ENCODE measurements at regions of chr18 and their contacts with region 1.

Region 1: GRCh38 chr18:63016270-63016669 is 300.9 kb downstream of the PHLPP1 start:
- DNase-seq: peak; percentile 36
- ATAC-seq: peak; percentile 68
- H3K4me3 ChIP-seq: no peak overlapping the region
- H3K27ac ChIP-seq: no peak overlapping the region
- H3K4me1 ChIP-seq: no peaks in the 10 kb centered on the region
- H3K27me3 ChIP-seq: peaks cover 0 to 4% of the 10 kb centered on the region in 2 experiments; a peak in 3 of 5 replicates
- CTCF ChIP-seq: peak; percentile 71
- EP300 ChIP-seq: no peak
- POLR2A ChIP-seq: no peak
- RAD21 ChIP-seq: peak; percentile 36; the same call in 1 of the 2 replicates

Region 2: DNA sequence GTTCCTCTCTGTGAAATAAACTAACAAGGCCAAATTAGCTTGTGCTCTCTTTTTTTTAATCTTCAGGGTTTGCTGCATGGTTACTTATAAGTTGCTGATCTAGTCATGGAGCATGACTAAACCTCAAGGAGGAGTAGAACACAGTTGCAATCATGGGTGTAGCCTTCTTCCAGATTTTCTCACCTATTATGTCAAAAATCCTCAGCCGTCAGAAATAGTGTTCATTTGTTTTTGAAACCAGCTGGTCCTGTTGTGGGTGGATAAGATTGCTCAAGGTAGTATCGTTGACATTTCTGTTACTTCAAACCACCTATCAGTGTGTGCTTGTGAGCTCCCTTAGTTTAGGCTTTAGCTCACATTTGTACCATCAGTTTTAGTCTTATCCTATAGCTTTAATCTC is 818.0 kb before region 1 on chr18:
- CTCF ChIA-PET with region 1: no interaction called
- POLR2A ChIA-PET with region 1: no interaction called
- in situ Hi-C with region 1: no loop called
- intact Hi-C with region 1: no loop called
- DNase-seq: no peak
- ATAC-seq: no peak
- H3K4me3 ChIP-seq: no peak overlapping the region
- H3K27ac ChIP-seq: no peak overlapping the region
- H3K4me1 ChIP-seq: 0 out of 2 replicates have a peak, but pooled peaks cover 6% of the 10 kb centered on the region
- H3K27me3 ChIP-seq: no peaks in the 10 kb centered on the region
- CTCF ChIP-seq: no peak
- EP300 ChIP-seq: no peak
- POLR2A ChIP-seq: no peak
- RAD21 ChIP-seq: no peak

Region 3: DNA sequence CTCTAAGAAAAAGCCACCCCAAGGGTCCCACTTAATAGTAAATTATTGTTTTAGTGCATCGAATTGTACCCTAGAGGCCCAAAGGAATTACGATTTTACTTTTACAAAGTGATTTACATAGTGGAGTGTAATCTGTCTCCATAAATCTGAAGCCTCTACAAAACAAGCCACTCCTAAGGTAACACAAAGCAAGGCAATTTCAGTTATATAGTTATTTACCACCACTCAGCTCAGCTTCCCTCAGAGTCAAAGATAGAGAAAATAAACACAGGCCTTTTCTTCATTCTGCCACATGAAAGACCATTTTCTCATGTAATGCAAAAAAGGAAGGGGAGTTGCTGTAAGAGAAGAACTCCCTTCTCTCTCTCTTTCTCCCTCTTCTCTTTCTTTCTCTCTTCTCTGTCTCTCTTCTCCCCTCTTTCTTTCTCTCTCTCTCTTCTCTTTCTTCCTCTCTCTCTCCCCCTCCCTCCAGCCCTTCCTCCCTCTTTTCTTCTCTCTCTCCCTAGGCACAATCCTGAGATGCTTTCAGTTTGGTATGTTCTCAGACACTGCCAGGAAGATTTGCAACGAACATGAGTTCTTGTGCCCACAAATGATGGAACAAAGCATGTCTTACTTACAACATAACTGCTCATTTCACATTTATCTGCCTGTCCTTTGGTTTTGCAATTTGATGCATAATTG is 38.8 kb after region 1 on chr18:
- CTCF ChIA-PET with region 1: no interaction called
- POLR2A ChIA-PET with region 1: no interaction called
- in situ Hi-C with region 1: no loop called
- intact Hi-C with region 1: no loop called
- DNase-seq: no peak
- ATAC-seq: no peak
- H3K4me3 ChIP-seq: no peak overlapping the region
- H3K27ac ChIP-seq: no peak overlapping the region
- H3K4me1 ChIP-seq: no peaks in the 10 kb centered on the region
- H3K27me3 ChIP-seq: peaks cover 0 to 9% of the 10 kb centered on the region in 2 experiments; a peak in 2 of 5 replicates
- CTCF ChIP-seq: no peak
- EP300 ChIP-seq: no peak
- POLR2A ChIP-seq: no peak
- RAD21 ChIP-seq: no peak

Region 4: GRCh38 chr18:63074981-63075404 is 58.7 kb after region 1 on chr18:
- CTCF ChIA-PET with region 1: no interaction called
- POLR2A ChIA-PET with region 1: no interaction called
- in situ Hi-C with region 1: no loop called
- intact Hi-C with region 1: loop called (anchors 5 kb)
- DNase-seq: peak; percentile 12
- ATAC-seq: peak; percentile 95
- H3K4me3 ChIP-seq: peak overlapping the region in 2 of 3 experiments; percentile 45 to 59; a peak in 3 of 6 replicates
- H3K27ac ChIP-seq: no peak overlapping the region
- H3K4me1 ChIP-seq: peaks cover 14% of the 10 kb centered on the region; the same call in 1 of the 2 replicates
- H3K27me3 ChIP-seq: 0 out of 5 replicates have a peak, but pooled peaks cover 0 to 2% of the 10 kb centered on the region in 2 experiments
- CTCF ChIP-seq: 0 out of 2 replicates have a peak, but pooled peaks have one; percentile 12
- EP300 ChIP-seq: no peak
- POLR2A ChIP-seq: no peak
- RAD21 ChIP-seq: no peak

Region 5: GRCh38 chr18:63119647-63120046 is 103.4 kb after region 1 on chr18:
- CTCF ChIA-PET with region 1: no interaction called
- POLR2A ChIA-PET with region 1: no interaction called
- in situ Hi-C with region 1: no loop called
- intact Hi-C with region 1: loop called (anchors 1 kb)
- DNase-seq: peak; percentile 6
- ATAC-seq: peak; percentile 73
- H3K4me3 ChIP-seq: no peak overlapping the region
- H3K27ac ChIP-seq: no peak overlapping the region
- H3K4me1 ChIP-seq: no peaks in the 10 kb centered on the region
- H3K27me3 ChIP-seq: no peaks in the 10 kb centered on the region
- CTCF ChIP-seq: peak; percentile 59
- EP300 ChIP-seq: no peak
- POLR2A ChIP-seq: no peak
- RAD21 ChIP-seq: no peak

Region 6: GRCh38 chr18:63155169-63155852 is 139.0 kb after region 1 on chr18:
- CTCF ChIA-PET with region 1: interaction called, 3 read pairs
- POLR2A ChIA-PET with region 1: no interaction called
- in situ Hi-C with region 1: no loop called
- intact Hi-C with region 1: loop called (anchors 1 kb)
- DNase-seq: peak; percentile 35
- ATAC-seq: peak; percentile 98
- H3K4me3 ChIP-seq: peak overlapping the region in 1 of 3 experiments; percentile 39; a peak in 1 of 6 replicates
- H3K27ac ChIP-seq: no peak overlapping the region
- H3K4me1 ChIP-seq: peaks cover 9% of the 10 kb centered on the region
- H3K27me3 ChIP-seq: peaks cover 1 to 73% of the 10 kb centered on the region in 2 experiments; a peak in 4 of 5 replicates
- CTCF ChIP-seq: peak; percentile 86
- EP300 ChIP-seq: no peak
- POLR2A ChIP-seq: no peak
- RAD21 ChIP-seq: peak; percentile 40; the same call in 1 of the 2 replicates

Region 7: DNA sequence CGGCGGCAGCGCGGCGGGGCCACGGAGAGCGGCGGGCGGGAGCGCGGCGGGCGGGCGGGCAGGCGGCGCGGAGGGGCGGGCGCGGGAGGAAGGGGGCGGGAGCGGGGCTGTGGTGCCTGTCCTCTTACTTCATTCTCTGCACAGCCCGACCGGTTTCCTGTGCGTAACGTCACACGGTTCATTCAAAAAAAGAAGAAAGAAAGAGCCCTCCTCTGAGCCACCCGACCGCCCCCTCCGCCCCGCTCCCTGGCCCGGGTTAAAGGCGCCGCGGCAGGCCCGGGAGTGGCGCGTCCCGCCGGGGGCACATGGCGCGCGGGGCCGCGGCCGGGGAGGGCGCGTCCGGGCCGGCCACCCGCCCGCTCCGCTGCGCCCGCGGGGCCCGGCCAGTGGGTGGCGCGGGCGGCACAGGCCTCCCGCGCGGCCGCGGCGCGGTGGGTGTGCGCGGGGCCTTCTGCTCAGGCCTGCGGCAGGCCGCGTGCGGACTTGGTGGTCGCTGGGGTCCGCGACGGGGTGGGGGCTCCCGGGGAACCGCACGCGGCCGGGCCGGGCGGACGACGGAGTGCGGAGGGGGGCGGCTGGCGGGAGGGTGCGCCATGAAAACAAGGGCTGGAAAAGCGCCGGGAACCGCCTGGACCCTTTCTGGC is 303.9 kb after region 1 on chr18:
- CTCF ChIA-PET with region 1: interaction called, 9 read pairs
- POLR2A ChIA-PET with region 1: no interaction called
- in situ Hi-C with region 1: loop called (anchors 5 kb)
- intact Hi-C with region 1: loop called (anchors 1 kb)
- DNase-seq: peak; percentile 61
- ATAC-seq: peak; percentile 80
- H3K4me3 ChIP-seq: peak overlapping the region; percentile 56 to 80 (median 67)
- H3K27ac ChIP-seq: no peak overlapping the region
- H3K4me1 ChIP-seq: peaks cover 46% of the 10 kb centered on the region
- H3K27me3 ChIP-seq: peaks cover 0 to 26% of the 10 kb centered on the region in 2 experiments; a peak in 4 of 5 replicates
- CTCF ChIP-seq: no peak
- EP300 ChIP-seq: no peak
- POLR2A ChIP-seq: peak in 1 of 2 experiments; percentile 34; a peak in 1 of 4 replicates
- RAD21 ChIP-seq: no peak

Region 8: GRCh38 chr18:63848159-63848558 is 831.9 kb after region 1 on chr18:
- CTCF ChIA-PET with region 1: no interaction called
- POLR2A ChIA-PET with region 1: no interaction called
- in situ Hi-C with region 1: loop called (anchors 25 kb)
- intact Hi-C with region 1: no loop called
- DNase-seq: peak; percentile 39
- ATAC-seq: peak; percentile 82
- H3K4me3 ChIP-seq: no peak overlapping the region
- H3K27ac ChIP-seq: no peak overlapping the region
- H3K4me1 ChIP-seq: no peaks in the 10 kb centered on the region
- H3K27me3 ChIP-seq: no peaks in the 10 kb centered on the region
- CTCF ChIP-seq: peak; percentile 62
- EP300 ChIP-seq: no peak
- POLR2A ChIP-seq: no peak
- RAD21 ChIP-seq: no peak